ENCODE measurements at regions of chr1 and their contacts with region 1.

Region 1: DNA sequence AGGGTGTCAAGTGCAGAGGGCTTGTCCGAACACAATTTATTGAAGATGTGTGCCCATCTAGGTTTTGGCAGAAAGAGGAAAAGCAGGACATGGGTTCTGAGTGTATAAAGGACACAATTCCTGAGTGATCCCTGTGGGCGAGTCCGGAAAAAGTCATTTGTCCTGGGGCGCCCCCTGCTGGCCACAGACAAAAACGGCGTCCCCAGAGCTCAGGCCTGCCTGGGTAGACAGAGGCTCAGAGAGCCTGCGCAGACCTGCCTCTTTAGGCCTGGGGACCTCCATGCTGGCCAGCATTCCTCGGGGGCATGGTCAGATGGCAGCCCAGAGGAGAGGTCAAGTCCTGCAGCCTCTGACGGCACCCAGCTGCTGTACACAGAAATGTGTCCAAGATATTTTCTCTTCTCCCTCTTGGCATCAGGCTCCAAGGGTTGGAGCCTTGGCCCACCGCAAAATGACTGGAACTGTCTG is 65.5 kb upstream of the LRP8 start:
- DNase-seq: peak; percentile 78

Region 2: DNA sequence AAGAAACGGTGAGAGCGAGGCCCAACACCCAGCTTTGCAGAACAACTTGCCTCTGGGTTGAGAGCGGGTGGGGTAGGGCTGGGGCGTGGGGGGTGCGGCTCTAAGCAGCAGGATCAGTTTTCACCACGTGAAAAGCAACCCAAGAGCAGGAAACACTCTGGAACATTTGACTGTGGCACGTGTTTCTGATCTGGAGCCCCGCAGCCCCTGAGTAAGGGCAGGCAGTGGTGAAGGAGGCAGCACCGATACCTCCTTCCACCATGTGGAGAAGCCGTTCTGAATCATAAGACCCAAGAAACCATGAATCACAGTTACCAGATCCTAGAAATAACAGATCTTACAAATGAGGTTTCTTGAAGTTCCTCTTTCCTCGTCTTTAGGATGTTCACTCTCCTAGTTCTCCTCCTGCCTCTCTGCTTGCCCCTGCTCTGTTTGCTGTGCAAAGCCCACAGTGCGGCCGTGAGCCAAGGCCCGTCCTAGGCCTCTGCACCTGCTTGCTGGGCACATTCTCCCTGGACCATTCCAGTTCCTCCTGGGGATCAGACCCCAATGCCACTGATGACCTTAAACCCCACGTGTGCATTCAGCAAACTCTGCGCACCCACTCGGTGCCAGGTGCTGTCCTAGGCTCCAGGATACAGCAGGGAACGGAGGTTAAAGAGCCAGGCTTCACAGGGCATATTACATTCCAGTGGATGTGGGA is 282.8 kb before region 1 on chr1:
- in situ Hi-C with region 1: no loop called
- DNase-seq: peak; percentile 68

Region 3: GRCh38 chr1:53294567-53294966 is 98.8 kb before region 1 on chr1:
- in situ Hi-C with region 1: loop called (anchors 10 kb)
- DNase-seq: no peak